HEK293 (cell line): ENCODE measurements at regions of chr10 and their contacts with region 1.

Region 1: DNA sequence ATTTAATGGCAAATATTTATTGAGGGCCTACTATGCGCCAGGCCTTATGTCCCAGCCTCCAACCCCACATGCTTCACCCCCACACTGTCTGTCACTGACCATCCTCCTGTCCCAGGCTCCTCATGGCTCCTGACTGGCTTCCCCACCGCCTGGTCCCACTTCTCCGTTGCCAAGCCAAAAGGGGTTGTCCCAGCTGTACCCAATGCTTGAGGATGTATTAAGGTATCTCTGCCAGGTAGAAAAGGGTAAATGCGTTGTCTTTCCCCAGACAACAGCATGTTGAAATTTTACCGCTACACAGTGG is 168.8 kb upstream of the FRMD4A start:
- H3K4me3 ChIP-seq: no peak overlapping the region
- H3K27ac ChIP-seq: no peak overlapping the region
- H3K4me1 ChIP-seq: no peaks in the 10 kb centered on the region
- CTCF ChIP-seq: no peak

Region 2: DNA sequence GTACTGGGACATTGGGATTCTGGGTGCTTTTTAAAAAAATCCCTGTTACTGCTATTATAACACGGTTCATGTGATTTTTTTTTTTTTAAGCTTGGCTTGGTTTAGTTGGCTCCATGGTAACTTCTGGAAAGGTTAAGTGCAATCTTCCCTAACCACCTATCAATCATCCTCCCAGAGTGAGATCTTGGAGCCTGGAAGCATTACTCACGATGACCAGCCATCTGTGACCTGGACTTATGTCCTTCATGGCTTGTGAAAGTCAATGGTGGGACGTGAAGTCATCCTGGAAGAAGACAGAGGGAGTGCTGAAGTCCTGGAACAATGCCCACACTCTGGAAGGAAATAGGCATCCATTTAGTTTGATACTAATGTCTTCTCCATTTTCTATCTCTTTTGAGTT is 33.3 kb before region 1 on chr10:
- CTCF ChIA-PET with region 1: interaction called, 11 read pairs
- POLR2A ChIA-PET with region 1: no interaction called
- H3K4me3 ChIP-seq: no peak overlapping the region
- H3K27ac ChIP-seq: no peak overlapping the region
- H3K4me1 ChIP-seq: no peaks in the 10 kb centered on the region
- CTCF ChIP-seq: no peak